Activated T-helper 1 cell treated with anti-CD3 and anti-CD28 coated beads, Interleukin-12 subunit alpha, Interleukin-12 subunit beta, Interleukin-2, Interleukin-4 antibody, amounts not matched to agents 30 ng/mL and 10 ng/mL and 1 ng/mL, durations not matched to agents 14 hours and 24 hours and 36 hours (primary cell): ENCODE measurements at regions of chr5 and their contacts with region 1.

Region 1: GRCh38 chr5:174311531-174312269 is 266.2 kb downstream of the NSG2 start:
- DNase-seq: peak; percentile 44
- H3K4me3 Mint-ChIP-seq: no peak overlapping the region
- H3K27ac Mint-ChIP-seq: no peak overlapping the region
- H3K4me1 Mint-ChIP-seq: no peaks in the 10 kb centered on the region
- H3K27me3 Mint-ChIP-seq: peaks cover 15% of the 10 kb centered on the region

Region 2: DNA sequence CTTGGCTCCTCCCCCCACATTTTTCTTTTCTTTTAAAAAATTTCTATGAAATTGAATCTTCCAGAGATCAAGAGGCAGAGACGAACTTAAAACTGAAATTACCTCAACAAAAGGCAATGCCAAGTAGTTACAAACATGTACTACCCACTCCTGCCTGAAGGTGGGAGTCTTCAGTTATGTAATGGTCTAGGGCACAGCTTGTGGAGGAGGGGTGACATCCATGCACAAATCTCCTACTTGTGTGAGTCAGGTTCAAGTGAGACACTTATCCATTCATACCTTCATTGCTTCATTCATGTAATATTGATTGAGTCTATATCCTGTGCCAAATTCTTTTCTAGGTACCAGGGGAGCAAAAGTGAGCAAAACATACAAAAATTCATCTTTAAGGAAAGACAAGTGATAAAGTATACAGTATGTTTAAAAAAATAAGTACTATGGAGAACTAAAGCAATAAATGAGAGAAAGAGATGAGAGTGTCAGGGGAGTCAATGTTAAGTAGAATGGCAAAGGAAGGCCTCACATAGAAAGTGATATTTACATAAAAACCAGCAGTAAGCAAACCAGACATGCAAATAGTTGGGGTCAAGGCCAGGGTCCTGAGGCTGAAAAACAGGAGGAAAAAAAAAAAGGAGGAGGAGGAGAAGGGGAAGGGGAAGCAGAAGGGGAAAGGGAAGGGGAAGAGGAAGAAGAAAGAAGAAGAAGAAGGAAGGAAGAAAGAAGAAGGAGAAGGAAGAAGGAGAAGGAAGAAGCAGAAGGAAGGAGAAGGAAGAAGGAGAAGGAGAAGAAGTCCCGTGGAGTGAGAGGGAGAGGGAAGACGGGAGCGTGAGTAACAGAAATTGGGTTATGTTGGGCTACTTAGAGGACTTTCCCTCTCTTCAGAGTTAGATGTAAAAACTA is 291.1 kb before region 1 on chr5:
- intact Hi-C with region 1: loop called (anchors 1 kb)
- DNase-seq: no peak
- H3K4me3 Mint-ChIP-seq: no peak overlapping the region
- H3K27ac Mint-ChIP-seq: no peak overlapping the region
- H3K4me1 Mint-ChIP-seq: no peaks in the 10 kb centered on the region
- H3K27me3 Mint-ChIP-seq: peaks cover 9% of the 10 kb centered on the region

Region 3: GRCh38 chr5:174045470-174046025 is 266.2 kb before region 1 on chr5 and contains the start of gene NSG2:
- intact Hi-C with region 1: loop called (anchors 1 kb)
- DNase-seq: peak; percentile 12
- H3K4me3 Mint-ChIP-seq: no peak within 1 kb of the TSS
- H3K27ac Mint-ChIP-seq: no peak within 1 kb of the TSS
- H3K4me1 Mint-ChIP-seq: no peaks in the 10 kb centered on the region
- H3K27me3 Mint-ChIP-seq: peaks cover under 1% of the 10 kb centered on the region
- total RNA-seq, gene NSG2: not detected in 2 replicates